AG04450 (cell line): ENCODE measurements at regions of chr1 and their contacts with region 1.

Region 1: GRCh38 chr1:183234660-183235476 is 48.8 kb downstream of the LAMC2 start:
- DNase-seq: peak; percentile 83
- H3K4me3 ChIP-seq: peak overlapping the region; percentile 50
- H3K27ac ChIP-seq: peak overlapping the region; percentile 93
- H3K27me3 ChIP-seq: no peaks in the 10 kb centered on the region
- CTCF ChIP-seq: peak; percentile 88

Region 2: DNA sequence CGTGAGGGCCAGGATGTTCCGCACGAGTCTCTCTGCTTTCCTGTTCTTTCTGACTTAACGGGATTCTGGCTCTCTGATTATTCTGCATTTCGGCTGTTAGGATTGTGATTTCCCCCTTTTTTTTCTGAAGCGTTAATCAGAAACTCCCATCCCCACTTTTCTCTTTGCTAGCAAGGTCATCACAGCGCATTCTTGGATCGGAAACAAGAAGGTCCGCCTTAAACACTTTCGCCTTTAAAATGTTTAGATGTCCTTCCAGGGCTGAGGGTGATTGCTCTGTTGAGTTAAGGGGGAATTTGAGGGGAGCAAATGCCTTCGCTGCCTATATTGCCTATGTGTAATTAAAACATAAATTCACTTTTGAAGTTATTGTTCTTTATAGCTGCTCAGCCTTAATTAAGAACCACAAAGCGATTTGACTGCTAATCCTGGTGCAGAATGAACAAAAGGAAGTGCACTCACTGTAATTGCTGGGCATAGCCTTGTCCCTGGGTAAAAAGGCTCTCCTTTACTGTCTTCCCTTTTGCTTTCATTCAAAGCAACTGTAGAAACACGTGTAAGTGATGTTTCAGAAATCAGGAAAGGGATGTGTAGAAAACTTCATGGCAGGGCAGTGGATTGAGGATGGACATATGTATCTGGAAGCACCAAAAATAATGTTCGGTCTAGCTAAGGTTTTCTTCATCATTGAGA is 210.4 kb before region 1 on chr1:
- CTCF ChIA-PET with region 1: interaction called, 13 read pairs
- POLR2A ChIA-PET with region 1: no interaction called
- DNase-seq: no peak
- H3K4me3 ChIP-seq: peak overlapping the region; percentile 88
- H3K27ac ChIP-seq: peak overlapping the region; percentile 77
- H3K27me3 ChIP-seq: no peaks in the 10 kb centered on the region
- CTCF ChIP-seq: no peak

Region 3: DNA sequence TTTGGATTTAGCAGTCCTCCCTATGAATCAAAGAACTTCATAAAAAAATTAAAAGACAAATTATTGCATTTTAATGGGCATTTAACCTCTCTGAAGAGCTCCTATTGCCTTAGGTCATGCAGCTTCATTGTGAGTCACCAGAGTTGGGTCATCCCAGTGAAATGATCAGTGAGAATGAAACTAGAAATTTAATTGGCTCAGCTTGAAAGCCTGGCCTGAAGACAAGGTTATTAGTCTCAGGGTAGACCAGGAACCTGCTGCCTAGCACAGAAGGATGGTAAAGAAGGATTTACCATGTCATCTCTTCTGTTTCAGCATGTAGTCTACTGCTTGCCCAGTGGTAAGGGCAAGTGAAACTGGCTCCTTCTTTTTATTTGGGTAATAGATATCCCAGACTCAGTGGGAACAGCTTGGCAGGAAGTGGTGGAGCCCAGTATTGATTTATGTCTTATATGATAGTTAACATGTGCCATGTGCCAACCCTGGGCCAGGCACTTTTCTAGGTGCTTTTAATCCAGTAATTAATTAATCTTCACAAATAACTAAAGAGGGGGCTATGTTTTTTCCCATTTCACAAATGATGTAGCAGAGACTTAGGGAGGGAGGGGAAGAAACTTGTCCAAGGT is 25.2 kb before region 1 on chr1:
- CTCF ChIA-PET with region 1: interaction called, 21 read pairs
- POLR2A ChIA-PET with region 1: interaction called, 3 read pairs
- DNase-seq: no peak
- H3K4me3 ChIP-seq: no peak overlapping the region
- H3K27ac ChIP-seq: no peak overlapping the region
- H3K27me3 ChIP-seq: no peaks in the 10 kb centered on the region
- CTCF ChIP-seq: no peak

Region 4: DNA sequence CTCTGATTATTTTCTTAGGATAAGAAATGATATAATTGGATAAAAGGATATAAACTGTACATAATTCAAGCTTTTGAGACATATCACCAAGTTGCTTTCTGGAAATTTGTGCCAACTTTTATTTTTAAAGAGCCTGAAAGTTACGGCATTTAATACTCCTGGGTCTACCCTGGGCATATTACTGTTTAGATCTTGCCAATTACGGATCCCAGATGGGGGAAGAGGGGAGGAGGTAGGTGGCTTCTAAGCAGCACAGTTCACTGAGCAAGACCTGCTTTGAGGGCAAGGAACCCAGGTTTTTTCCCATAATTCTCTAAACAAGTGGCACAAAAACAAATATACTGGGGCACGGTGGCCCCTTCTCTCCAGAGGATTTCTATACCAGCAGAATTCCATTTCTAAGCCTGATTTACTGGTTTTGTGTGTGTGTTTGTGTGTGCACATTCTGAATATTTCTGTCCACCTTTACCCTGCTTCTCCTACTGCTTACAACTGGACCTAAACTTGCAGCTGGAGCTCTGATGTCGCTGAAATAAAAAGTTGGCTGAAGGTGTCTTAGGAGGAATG is 27.8 kb after region 1 on chr1:
- CTCF ChIA-PET with region 1: interaction called, 11 read pairs
- POLR2A ChIA-PET with region 1: interaction called, 5 read pairs
- DNase-seq: no peak
- H3K4me3 ChIP-seq: no peak overlapping the region
- H3K27ac ChIP-seq: no peak overlapping the region
- H3K27me3 ChIP-seq: no peaks in the 10 kb centered on the region
- CTCF ChIP-seq: no peak

Region 5: GRCh38 chr1:183281553-183282091 is 46.8 kb after region 1 on chr1:
- CTCF ChIA-PET with region 1: interaction called, 16 read pairs
- POLR2A ChIA-PET with region 1: interaction called, 3 read pairs
- DNase-seq: peak; percentile 90
- H3K4me3 ChIP-seq: no peak overlapping the region
- H3K27ac ChIP-seq: peak overlapping the region; percentile 2
- H3K27me3 ChIP-seq: no peaks in the 10 kb centered on the region
- CTCF ChIP-seq: peak; percentile 91